Activated CD8-positive, alpha-beta T cell treated with anti-CD3 and anti-CD28 coated beads for 36 hours (primary cell): ENCODE measurements at regions of chr5 and their contacts with region 1.

Region 1: GRCh38 chr5:54492178-54492577 is 25.4 kb upstream of the SNX18 start:
- DNase-seq: no peak
- ATAC-seq: no peak
- H3K4me3 Mint-ChIP-seq: no peak overlapping the region
- H3K27ac Mint-ChIP-seq: no peak overlapping the region
- H3K4me1 Mint-ChIP-seq: no peaks in the 10 kb centered on the region
- H3K27me3 Mint-ChIP-seq: peaks cover 2% of the 10 kb centered on the region
- CTCF ChIP-seq: no peak

Region 2: DNA sequence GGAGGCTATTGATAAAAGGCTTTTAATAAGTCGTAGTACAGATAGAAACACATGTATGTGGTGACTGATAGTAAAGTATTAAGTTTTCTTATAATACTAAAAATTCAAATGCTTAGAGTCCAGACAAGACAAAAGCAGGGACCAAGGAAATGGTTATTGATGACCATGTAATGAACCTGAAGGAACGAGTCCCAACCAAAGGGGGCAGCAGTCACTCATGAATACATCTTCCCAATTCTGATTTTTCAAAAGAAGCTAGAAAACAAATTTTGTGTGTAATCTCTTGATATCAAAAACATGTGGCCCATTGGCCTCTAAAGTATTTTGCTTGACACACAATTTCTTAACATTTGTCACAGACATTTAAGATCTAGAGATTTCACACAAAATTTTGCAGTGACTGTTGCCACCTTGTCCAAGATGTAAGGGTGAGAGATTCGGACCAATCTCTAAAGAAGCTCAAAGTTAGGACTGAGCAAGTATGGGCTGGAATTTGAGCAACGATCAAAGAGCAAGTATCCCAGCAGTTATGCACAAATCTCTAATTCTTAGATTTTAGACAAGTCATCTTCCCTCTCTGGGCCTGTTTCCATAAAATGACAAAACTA is 248.6 kb before region 1 on chr5:
- CTCF ChIA-PET with region 1: interaction called, 45 read pairs
- POLR2A ChIA-PET with region 1: no interaction called
- intact Hi-C with region 1: loop called (anchors 5 kb)
- DNase-seq: peak; percentile 62
- ATAC-seq: no peak
- H3K4me3 Mint-ChIP-seq: no peak overlapping the region
- H3K27ac Mint-ChIP-seq: no peak overlapping the region
- H3K4me1 Mint-ChIP-seq: peaks cover 8% of the 10 kb centered on the region
- H3K27me3 Mint-ChIP-seq: no peaks in the 10 kb centered on the region
- CTCF ChIP-seq: peak; percentile 76

Region 3: GRCh38 chr5:54443270-54443669 is 48.9 kb before region 1 on chr5:
- CTCF ChIA-PET with region 1: interaction called, 33 read pairs
- POLR2A ChIA-PET with region 1: no interaction called
- intact Hi-C with region 1: no loop called
- DNase-seq: no peak
- ATAC-seq: no peak
- H3K4me3 Mint-ChIP-seq: no peak overlapping the region
- H3K27ac Mint-ChIP-seq: no peak overlapping the region
- H3K4me1 Mint-ChIP-seq: peaks cover 20% of the 10 kb centered on the region
- H3K27me3 Mint-ChIP-seq: no peaks in the 10 kb centered on the region
- CTCF ChIP-seq: peak; percentile 57

Region 4: DNA sequence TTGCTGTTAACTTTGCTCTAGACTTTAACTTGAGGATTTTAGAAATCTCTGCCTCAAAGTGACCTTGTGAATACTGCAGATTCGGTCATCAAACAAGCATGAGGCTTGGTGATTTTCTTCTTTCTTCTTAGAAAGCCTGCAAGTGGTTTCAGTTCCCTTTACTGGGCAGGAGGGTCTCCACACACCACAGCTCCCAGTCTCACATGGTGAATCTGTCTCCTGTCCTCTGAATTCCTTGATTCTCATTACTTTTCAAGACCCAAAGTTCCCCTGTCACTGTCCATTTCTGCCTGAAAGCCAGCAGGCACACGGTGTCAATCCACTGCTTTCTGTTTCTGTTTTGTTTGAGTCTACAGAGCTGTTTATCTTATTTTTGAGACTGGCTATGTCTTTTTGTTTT is 22.6 kb before region 1 on chr5:
- CTCF ChIA-PET with region 1: interaction called, 20 read pairs
- POLR2A ChIA-PET with region 1: no interaction called
- intact Hi-C with region 1: no loop called
- DNase-seq: no peak
- ATAC-seq: no peak
- H3K4me3 Mint-ChIP-seq: peak overlapping the region; percentile 6
- H3K27ac Mint-ChIP-seq: peak overlapping the region; percentile 50
- H3K4me1 Mint-ChIP-seq: peaks cover 4% of the 10 kb centered on the region
- H3K27me3 Mint-ChIP-seq: peaks cover 3% of the 10 kb centered on the region
- CTCF ChIP-seq: no peak

Region 5: GRCh38 chr5:54517174-54518092 is 25.3 kb after region 1 on chr5 and contains the start of gene SNX18:
- CTCF ChIA-PET with region 1: interaction called, 13 read pairs
- POLR2A ChIA-PET with region 1: no interaction called
- intact Hi-C with region 1: no loop called
- DNase-seq: peak; percentile 90
- ATAC-seq: peak; percentile 83
- H3K4me3 Mint-ChIP-seq: peak within 1 kb of the TSS; percentile 75
- H3K27ac Mint-ChIP-seq: no peak within 1 kb of the TSS
- H3K4me1 Mint-ChIP-seq: peaks cover 38% of the 10 kb centered on the region
- H3K27me3 Mint-ChIP-seq: peaks cover 3% of the 10 kb centered on the region
- CTCF ChIP-seq: peak; percentile 91
- total RNA-seq, gene SNX18: 5.9 to 6.8 TPM

Region 6: GRCh38 chr5:54915466-54916027 is 423.4 kb after region 1 on chr5:
- CTCF ChIA-PET with region 1: no interaction called
- POLR2A ChIA-PET with region 1: no interaction called
- intact Hi-C with region 1: no loop called
- DNase-seq: no peak
- ATAC-seq: no peak
- H3K4me3 Mint-ChIP-seq: no peak overlapping the region
- H3K27ac Mint-ChIP-seq: no peak overlapping the region
- H3K4me1 Mint-ChIP-seq: no peaks in the 10 kb centered on the region
- H3K27me3 Mint-ChIP-seq: peaks cover 24% of the 10 kb centered on the region
- CTCF ChIP-seq: no peak